ENCODE measurements at regions of chr11 and their contacts with region 1.

Region 1: DNA sequence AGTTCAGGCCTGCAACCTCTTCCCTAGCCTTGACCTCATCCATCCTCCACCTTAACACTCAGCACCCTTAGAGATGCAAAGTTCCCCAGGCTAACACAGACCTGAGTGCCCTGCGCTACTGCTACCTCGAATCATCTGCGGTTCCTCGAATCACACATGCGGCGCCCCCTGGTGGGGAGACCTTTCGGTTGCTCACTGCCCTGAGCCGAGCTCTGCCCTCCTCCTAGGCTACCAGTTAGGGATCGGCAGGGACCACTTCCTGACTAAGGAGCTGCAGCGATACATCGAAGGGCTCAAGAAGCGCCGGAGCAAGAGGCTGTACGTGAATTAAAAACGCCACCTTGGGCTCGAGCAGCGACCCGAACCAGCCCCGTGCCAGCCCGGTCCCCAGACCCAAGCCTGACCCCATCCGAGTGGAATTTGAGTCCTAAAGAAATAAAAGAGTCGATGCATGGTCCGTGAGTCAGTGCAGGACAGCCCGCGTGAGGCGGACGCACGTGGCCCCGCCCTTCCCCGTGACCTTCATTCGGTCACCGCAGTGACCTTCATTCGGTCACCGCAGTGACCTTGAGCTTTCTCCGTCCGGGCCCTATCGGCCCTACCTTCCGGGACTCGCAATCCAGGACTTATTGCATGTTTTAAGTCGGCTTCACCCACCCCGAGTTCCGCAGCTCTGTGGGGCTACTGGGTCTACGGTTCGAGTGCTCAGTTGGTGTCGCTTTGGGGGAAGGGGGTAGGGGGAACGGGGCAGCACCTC is 830 bp upstream of the ESRRA start:
- DNase-seq: peak; percentile 91
- H3K4me3 ChIP-seq: peak overlapping the region; percentile 53 to 69
- H3K27ac ChIP-seq: peak overlapping the region; percentile 78 to 88
- H3K4me1 ChIP-seq: peaks cover 14% of the 10 kb centered on the region
- H3K27me3 ChIP-seq: peaks cover 5% of the 10 kb centered on the region
- CTCF ChIP-seq: peak; percentile 83 to 94 (median 89)
- POLR2A ChIP-seq: no peak

Region 2: GRCh38 chr11:64185816-64186498 is 118.5 kb before region 1 on chr11 and contains the start of gene STIP1:
- intact Hi-C with region 1: loop called (anchors 5 kb)
- DNase-seq: peak; percentile 100
- H3K4me3 ChIP-seq: peak within 1 kb of the TSS; percentile 62 to 67
- H3K27ac ChIP-seq: peak within 1 kb of the TSS; percentile 97 to 99
- H3K4me1 ChIP-seq: no peaks in the 10 kb centered on the region
- H3K27me3 ChIP-seq: no peaks in the 10 kb centered on the region
- CTCF ChIP-seq: peak in 2 of 4 experiments; percentile 23 to 51
- POLR2A ChIP-seq: peak; percentile 94
- total RNA-seq, gene STIP1: 104 to 139 TPM

Region 3: GRCh38 chr11:64207256-64208085 is 97.0 kb before region 1 on chr11:
- intact Hi-C with region 1: loop called (anchors 5 kb)
- DNase-seq: no peak
- H3K4me3 ChIP-seq: peak overlapping the region; percentile 10 to 19
- H3K27ac ChIP-seq: peak overlapping the region; percentile 43 to 61
- H3K4me1 ChIP-seq: no peaks in the 10 kb centered on the region
- H3K27me3 ChIP-seq: no peaks in the 10 kb centered on the region
- CTCF ChIP-seq: no peak
- POLR2A ChIP-seq: no peak

Region 4: GRCh38 chr11:64251016-64251752 is 53.3 kb before region 1 on chr11 and contains the start of gene PLCB3:
- intact Hi-C with region 1: loop called (anchors 5 kb)
- DNase-seq: peak; percentile 52
- H3K4me3 ChIP-seq: peak within 1 kb of the TSS; percentile 73 to 90
- H3K27ac ChIP-seq: peak within 1 kb of the TSS; percentile 70 to 83
- H3K4me1 ChIP-seq: peaks cover 11% of the 10 kb centered on the region
- H3K27me3 ChIP-seq: no peaks in the 10 kb centered on the region
- CTCF ChIP-seq: peak; percentile 84 to 98 (median 90)
- POLR2A ChIP-seq: peak; percentile 69
- total RNA-seq, gene PLCB3: 26.3 to 43.1 TPM

Measured in prostate gland (tissue), 2 donors.